ENCODE measurements at regions of chrX and their contacts with region 1.

Region 1: GRCh38 chrX:47217642-47218279 is 720 bp upstream of the CDK16 start:
- DNase-seq: peak; percentile 98 to 100 (median 99)
- H3K4me3 ChIP-seq: peak overlapping the region; percentile 70 to 73
- H3K4me3 Mint-ChIP-seq: peak overlapping the region; percentile 89 to 99 (median 96)
- H3K27ac ChIP-seq: peak overlapping the region; percentile 99
- H3K27ac Mint-ChIP-seq: peak overlapping the region; percentile 95 to 100 (median 99)
- H3K4me1 ChIP-seq: peaks cover 30% of the 10 kb centered on the region
- H3K4me1 Mint-ChIP-seq: peaks cover 26 to 56% (median 41%) of the 10 kb centered on the region in 4 donors
- H3K27me3 ChIP-seq: no peaks in the 10 kb centered on the region
- H3K27me3 Mint-ChIP-seq: no peaks in the 10 kb centered on the region

Region 2: GRCh38 chrX:46777971-46778810 is 439.6 kb before region 1 on chrX:
- CTCF ChIA-PET with region 1: no interaction called
- POLR2A ChIA-PET with region 1: no interaction called
- intact Hi-C with region 1: no loop called
- DNase-seq: no peak
- H3K4me3 ChIP-seq: no peak overlapping the region
- H3K4me3 Mint-ChIP-seq: no peak overlapping the region
- H3K27ac ChIP-seq: no peak overlapping the region
- H3K27ac Mint-ChIP-seq: no peak overlapping the region
- H3K4me1 ChIP-seq: no peaks in the 10 kb centered on the region
- H3K4me1 Mint-ChIP-seq: peaks cover 0 to 3% (median 0%) of the 10 kb centered on the region in 4 donors
- H3K27me3 ChIP-seq: no peaks in the 10 kb centered on the region
- H3K27me3 Mint-ChIP-seq: peaks cover 0 to 1% of the 10 kb centered on the region in 2 donors

Region 3: DNA sequence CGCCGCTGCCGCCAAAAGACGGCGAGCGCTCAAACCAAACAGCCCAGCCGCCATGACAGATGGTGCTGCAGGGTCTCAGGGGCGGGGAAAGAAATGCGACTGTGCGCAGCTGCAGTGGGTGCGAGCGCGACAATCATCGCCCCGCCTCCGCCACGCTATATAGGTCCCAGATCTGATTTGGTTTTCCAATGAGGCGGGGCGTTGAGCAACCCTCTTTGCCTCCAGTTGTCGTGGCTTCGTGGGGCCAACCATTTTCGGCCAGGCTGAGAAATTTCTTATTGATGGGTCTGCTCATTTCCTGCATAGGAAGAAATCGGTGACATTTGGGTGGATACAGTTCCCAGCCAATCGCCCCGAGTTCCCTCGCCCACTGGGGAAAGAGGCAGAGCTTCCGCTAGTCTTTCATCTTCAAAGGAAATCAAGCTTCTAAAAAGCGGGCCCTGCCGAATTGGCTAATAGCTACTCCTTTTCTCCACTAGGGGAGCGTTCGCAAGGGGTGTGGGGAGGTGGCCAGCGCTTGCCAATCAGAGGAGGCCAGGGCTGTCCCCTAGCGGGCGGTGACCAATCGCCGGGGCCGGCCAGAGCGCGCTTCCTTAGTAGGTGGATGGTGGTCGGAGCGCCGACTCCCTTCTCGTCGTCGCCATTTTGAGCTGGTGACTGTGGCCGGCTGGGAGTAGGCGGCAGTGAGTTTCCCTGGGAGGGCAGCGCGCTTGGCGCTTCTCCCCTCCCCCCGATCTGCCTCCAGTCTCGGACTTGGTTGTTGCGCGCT is 73.0 kb before region 1 on chrX and contains the starts of genes NDUFB11 and RBM10:
- CTCF ChIA-PET with region 1: no interaction called
- POLR2A ChIA-PET with region 1: interaction called, 18 read pairs
- intact Hi-C with region 1: loop called (anchors 2 kb)
- DNase-seq: peak; percentile 87 to 95 (median 91)
- H3K4me3 ChIP-seq: peak within 1 kb of the TSS; percentile 69 to 73
- H3K4me3 Mint-ChIP-seq: peak within 1 kb of the TSS; percentile 94 to 99 (median 96)
- H3K27ac ChIP-seq: peak within 1 kb of the TSS; percentile 91
- H3K27ac Mint-ChIP-seq: peak within 1 kb of the TSS; percentile 95 to 99 (median 98)
- H3K4me1 ChIP-seq: peaks cover 36% of the 10 kb centered on the region
- H3K4me1 Mint-ChIP-seq: peaks cover 19 to 52% (median 33%) of the 10 kb centered on the region in 4 donors
- H3K27me3 ChIP-seq: no peaks in the 10 kb centered on the region
- H3K27me3 Mint-ChIP-seq: no peaks in the 10 kb centered on the region
- total RNA-seq, gene NDUFB11: 53.2 to 60.6 TPM
- total RNA-seq, gene RBM10: 51.2 to 53.3 TPM

Region 4: GRCh38 chrX:47233337-47234113 is 15.8 kb after region 1 on chrX:
- CTCF ChIA-PET with region 1: interaction called, 3 read pairs
- POLR2A ChIA-PET with region 1: interaction called, 85 read pairs
- intact Hi-C with region 1: loop called (anchors 1 kb)
- DNase-seq: peak; percentile 95 to 98 (median 96)
- H3K4me3 ChIP-seq: peak overlapping the region in 1 of 2 donors; percentile 60
- H3K4me3 Mint-ChIP-seq: peak overlapping the region; percentile 86 to 96 (median 91)
- H3K27ac ChIP-seq: peak overlapping the region; percentile 97
- H3K27ac Mint-ChIP-seq: peak overlapping the region; percentile 93 to 100 (median 98)
- H3K4me1 ChIP-seq: peaks cover 31% of the 10 kb centered on the region
- H3K4me1 Mint-ChIP-seq: peaks cover 11 to 34% (median 25%) of the 10 kb centered on the region in 4 donors
- H3K27me3 ChIP-seq: no peaks in the 10 kb centered on the region
- H3K27me3 Mint-ChIP-seq: no peaks in the 10 kb centered on the region

Region 5: DNA sequence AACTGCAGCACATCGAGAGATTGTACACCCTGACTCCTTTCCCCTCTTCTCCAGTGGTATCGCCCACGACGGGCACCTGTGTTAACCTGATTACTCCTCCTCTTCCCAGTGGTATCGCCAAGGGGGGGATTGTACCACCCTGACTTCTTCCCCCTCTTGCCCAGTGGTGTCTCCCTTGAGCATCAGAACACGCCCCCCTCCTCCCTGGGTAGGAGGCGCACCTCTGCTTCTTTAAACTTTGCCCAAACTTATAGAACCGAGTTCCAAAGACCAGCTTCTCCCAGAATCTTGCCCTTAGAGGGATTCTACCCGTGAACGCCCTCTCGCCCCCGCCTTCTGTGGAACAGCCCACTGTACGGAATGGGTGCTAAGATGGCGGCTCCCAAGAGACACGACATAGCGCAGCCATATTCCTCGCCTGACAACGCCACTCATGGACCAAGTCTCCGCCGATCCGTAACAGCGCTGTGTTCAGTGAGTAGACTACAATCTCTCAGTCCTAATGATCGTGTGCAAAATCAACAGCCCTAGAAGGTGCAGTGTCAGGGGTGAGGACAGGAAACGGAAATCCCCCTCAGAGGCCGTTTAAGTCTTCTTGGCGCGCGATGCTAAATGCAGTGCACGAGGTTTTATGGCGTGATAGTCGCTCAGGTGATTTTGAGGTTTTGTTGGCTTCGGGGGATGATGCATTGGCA is 148.4 kb after region 1 on chrX:
- CTCF ChIA-PET with region 1: no interaction called
- POLR2A ChIA-PET with region 1: no interaction called
- intact Hi-C with region 1: loop called (anchors 5 kb)
- DNase-seq: peak; percentile 71 to 86 (median 78)
- H3K4me3 ChIP-seq: peak overlapping the region; percentile 11 to 68
- H3K4me3 Mint-ChIP-seq: peak overlapping the region; percentile 84 to 97 (median 92)
- H3K27ac ChIP-seq: peak overlapping the region; percentile 57
- H3K27ac Mint-ChIP-seq: peak overlapping the region; percentile 90 to 98 (median 96)
- H3K4me1 ChIP-seq: peaks cover 10% of the 10 kb centered on the region
- H3K4me1 Mint-ChIP-seq: peaks cover 11 to 25% (median 16%) of the 10 kb centered on the region in 4 donors
- H3K27me3 ChIP-seq: no peaks in the 10 kb centered on the region
- H3K27me3 Mint-ChIP-seq: no peaks in the 10 kb centered on the region

Region 6: DNA sequence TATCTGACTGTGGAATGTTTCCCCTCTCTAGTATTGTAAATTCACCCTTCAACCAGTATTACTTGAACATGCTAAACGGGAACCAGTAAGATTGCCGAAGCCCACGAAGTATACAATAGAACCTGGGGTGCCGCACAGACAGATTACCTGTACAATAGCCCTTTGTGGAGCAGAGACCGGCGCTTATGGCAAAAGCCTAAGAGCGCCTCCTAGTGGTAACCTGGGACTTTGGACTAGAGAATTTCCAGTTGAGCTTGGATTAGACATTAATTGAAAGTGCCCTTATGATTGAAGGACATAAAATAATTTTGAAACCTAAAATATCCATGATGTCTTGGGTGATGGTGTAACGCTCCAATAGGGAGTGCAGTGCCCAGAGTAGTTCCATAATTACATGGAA is 166.7 kb after region 1 on chrX:
- CTCF ChIA-PET with region 1: interaction called, 5 read pairs
- POLR2A ChIA-PET with region 1: interaction called, 4 read pairs
- intact Hi-C with region 1: loop called (anchors 1 kb)
- DNase-seq: peak; percentile 71 to 80 (median 77)
- H3K4me3 ChIP-seq: no peak overlapping the region
- H3K4me3 Mint-ChIP-seq: peak overlapping the region in 1 of 8 donors; percentile 43
- H3K27ac ChIP-seq: no peak overlapping the region
- H3K27ac Mint-ChIP-seq: peak overlapping the region in 2 of 7 donors; percentile 14 to 70
- H3K4me1 ChIP-seq: peaks cover 18% of the 10 kb centered on the region
- H3K4me1 Mint-ChIP-seq: peaks cover 9 to 20% (median 13%) of the 10 kb centered on the region in 4 donors
- H3K27me3 ChIP-seq: no peaks in the 10 kb centered on the region
- H3K27me3 Mint-ChIP-seq: no peaks in the 10 kb centered on the region

Region 7: DNA sequence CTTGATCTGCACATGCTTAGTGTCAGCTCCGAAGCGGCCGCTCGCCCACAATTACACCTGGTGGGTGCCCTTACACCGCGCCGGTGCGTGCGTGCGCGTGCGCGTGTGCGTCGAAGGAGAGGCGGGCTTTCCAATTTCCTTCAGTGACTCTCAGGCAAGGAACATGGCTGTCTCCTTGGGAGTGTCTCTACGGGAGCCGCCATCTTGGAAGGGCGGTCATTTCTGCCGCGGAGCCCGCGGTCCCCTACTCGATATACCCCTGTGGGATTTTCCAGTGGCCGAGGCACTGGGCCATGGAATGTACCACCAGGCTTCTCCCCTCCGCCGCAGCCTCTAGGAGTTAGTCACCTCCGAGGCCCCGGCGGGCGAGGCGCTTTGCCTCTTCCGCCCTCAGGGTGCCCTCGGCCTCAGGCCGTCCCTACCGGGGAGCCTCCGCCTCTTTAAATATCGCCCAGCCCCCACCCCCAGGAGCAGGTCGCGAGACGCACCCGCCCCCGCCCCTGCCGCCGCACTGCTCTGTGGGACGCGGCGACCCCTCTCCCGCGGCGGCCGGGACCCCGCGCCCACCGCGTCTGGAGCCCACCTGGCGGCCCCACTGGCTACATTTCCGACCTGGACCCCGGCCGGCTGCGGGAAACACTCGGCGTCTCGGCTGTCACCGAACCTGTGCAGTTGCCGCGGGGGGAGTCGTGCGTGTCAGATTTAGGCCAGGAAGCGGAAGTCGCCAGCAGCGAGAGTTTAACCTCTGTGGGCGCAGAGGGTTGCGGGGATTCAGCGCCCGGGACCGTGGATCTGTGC is 264.9 kb after region 1 on chrX and contains the start of gene ZNF41:
- CTCF ChIA-PET with region 1: no interaction called
- POLR2A ChIA-PET with region 1: no interaction called
- intact Hi-C with region 1: loop called (anchors 5 kb)
- DNase-seq: peak; percentile 78 to 86 (median 83)
- H3K4me3 ChIP-seq: peak within 1 kb of the TSS; percentile 70 to 88
- H3K4me3 Mint-ChIP-seq: peak within 1 kb of the TSS; percentile 82 to 95 (median 90)
- H3K27ac ChIP-seq: peak within 1 kb of the TSS; percentile 77
- H3K27ac Mint-ChIP-seq: peak within 1 kb of the TSS; percentile 85 to 99 (median 97)
- H3K4me1 ChIP-seq: peaks cover 29% of the 10 kb centered on the region
- H3K4me1 Mint-ChIP-seq: peaks cover 12 to 41% (median 24%) of the 10 kb centered on the region in 4 donors
- H3K27me3 ChIP-seq: no peaks in the 10 kb centered on the region
- H3K27me3 Mint-ChIP-seq: no peaks in the 10 kb centered on the region
- total RNA-seq, gene ZNF41: 16.1 TPM

Region 8: DNA sequence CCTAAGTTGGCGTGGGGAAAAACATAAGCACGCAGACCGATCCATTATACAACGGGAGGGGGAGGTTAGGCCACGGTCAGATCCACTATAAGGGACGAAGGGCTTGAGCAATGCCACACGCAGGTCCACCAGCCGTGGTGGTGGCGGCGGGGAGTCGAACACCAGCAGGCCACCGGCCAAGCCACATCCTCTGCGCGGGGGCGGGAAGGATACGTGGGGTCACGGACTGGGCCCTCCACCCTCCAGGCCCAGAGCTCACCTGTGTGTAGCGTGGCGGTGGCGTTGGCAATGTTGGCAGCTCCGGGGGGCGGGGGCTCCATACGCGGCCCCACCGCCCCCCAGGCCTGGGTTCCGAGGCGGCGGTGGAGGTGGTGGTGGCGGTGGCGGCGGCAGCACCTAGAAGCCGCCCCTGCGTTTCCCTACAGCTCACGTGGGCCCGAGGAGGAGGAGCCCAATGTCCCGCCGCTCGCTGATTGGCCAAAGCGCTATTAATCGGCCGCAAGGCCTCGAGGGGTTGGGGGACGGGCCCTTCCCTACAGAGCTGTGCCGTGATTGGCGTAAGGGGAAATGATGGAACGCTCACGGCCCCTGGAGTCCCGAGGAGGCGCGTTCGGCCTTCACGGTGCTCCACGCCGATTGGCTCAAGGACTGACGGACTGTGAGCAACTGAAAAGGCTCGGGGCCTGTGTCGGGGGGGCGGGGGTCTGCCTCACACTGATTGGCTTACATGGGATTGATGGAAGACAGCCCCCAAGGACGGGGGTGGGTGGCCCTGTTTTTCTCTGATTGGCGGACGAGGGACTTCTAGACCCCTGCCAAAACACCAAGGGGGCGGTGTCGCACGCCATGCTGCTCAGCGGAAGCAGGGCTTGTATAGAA is 432.6 kb after region 1 on chrX and contains the start of gene ELK1:
- CTCF ChIA-PET with region 1: no interaction called
- POLR2A ChIA-PET with region 1: interaction called, 3 read pairs
- intact Hi-C with region 1: loop called (anchors 5 kb)
- DNase-seq: peak; percentile 85 to 95 (median 90)
- H3K4me3 ChIP-seq: peak within 1 kb of the TSS in 1 of 2 donors; percentile 69
- H3K4me3 Mint-ChIP-seq: peak within 1 kb of the TSS; percentile 85 to 94 (median 88)
- H3K27ac ChIP-seq: peak within 1 kb of the TSS; percentile 74
- H3K27ac Mint-ChIP-seq: peak within 1 kb of the TSS; percentile 87 to 97 (median 97)
- H3K4me1 ChIP-seq: peaks cover 33% of the 10 kb centered on the region
- H3K4me1 Mint-ChIP-seq: peaks cover 31 to 42% (median 36%) of the 10 kb centered on the region in 4 donors
- H3K27me3 ChIP-seq: no peaks in the 10 kb centered on the region
- H3K27me3 Mint-ChIP-seq: no peaks in the 10 kb centered on the region
- total RNA-seq, gene ELK1: 36.4 to 38.3 TPM

Measured in CD4-positive, alpha-beta memory T cell (primary cell).